ENCODE measurements at regions of chr2 and their contacts with region 1.

Region 1: DNA sequence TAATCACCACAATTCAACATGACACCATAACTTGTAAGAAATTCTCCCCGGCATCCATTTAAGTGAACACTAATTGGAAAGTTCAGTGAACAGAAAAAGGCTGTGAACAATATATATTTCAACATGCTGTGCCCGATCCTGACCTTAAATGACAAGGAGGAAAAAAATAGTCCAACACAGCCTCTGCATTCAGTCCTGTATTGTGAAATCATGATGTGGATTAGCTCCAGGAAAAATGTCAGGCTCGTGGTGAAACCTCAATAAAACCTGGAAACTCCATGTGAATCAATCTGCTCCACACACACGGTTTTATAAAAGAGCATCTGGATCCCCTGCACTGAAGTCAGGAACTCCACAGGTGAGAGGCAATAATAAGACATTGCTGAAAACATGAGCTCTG is 145.4 kb upstream of the SPOPL start:
- DNase-seq: peak; percentile 72
- H3K4me3 ChIP-seq: no peak overlapping the region
- H3K27me3 ChIP-seq: no peaks in the 10 kb centered on the region
- CTCF ChIP-seq: no peak

Region 2: DNA sequence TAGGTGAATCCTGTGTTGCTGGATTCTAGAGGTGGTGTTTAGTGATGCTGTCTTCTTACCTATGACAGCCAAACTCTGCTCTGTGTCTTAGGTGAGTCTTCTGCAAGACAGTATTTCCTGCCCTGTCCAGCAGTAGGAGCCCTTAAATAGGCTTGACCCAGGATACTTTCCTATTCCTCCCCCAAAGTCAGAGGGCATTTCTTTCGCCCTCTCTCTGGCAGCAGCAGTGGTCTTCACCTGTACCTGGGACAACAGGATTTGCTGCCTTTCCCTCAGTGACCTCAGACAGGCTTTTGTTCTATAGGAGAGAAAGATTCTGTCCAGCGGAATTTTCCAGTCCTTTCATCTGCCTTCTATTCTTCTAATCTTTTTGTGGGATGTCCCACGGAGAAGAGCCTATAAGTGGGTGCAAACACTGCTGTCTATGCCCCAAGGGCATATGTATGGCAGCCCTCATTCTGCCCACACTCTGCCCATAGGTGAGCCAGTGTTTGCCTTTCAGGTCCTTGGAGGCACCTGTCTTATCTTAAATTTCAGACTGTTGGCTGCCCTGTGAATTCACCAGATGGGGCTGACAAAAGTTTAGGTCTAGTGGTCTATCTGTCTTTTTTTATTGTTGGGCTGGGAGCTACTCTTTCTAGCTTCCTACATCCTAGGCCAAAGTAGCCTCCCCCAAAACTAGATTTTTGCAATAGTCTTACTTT is 32.0 kb before region 1 on chr2:
- CTCF ChIA-PET with region 1: no interaction called
- POLR2A ChIA-PET with region 1: no interaction called
- DNase-seq: no peak
- H3K4me3 ChIP-seq: no peak overlapping the region
- H3K27me3 ChIP-seq: no peaks in the 10 kb centered on the region
- CTCF ChIP-seq: no peak

Region 3: DNA sequence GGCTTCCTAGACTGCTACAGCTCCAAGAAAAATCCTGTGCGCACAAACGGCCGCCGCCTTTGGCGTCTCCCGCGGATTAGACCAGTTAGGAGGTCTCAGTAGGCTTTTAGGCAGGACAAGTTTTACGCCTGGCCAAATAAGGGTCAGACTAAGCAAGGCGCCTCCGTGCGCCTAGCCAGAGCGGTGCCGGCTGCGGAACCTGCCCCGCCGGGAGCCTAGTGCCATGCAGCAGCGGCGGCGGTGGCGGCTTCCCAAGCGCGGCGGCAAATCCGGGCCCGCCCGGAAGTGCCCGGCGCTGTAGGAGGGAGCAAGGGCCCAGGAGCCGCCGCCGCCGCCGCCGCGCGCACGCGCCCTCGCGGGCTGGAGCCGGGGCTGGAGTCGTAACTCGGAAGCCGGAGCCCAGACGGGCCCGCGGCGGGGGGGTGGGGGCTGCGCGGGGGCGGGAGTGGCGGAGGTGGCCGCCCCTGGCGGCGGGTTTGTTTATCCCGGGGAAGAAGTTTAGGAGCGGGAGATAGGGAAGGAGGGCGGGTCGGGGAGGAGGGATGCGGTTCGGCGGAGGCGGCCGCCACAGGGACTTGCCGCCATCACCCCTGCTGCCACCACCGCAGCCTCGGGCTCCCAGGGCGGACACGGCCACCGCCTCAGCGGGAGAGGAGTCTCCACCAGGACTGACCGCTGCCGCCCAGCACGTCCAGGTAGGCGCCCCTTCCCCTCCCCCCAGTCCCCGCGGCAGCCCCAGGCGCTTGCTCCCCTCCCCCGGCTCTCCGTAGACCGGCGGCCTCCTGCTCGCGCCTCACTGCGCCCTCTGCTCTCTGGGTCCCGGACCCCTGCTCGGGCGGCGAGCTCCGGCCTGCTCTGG is 145.5 kb after region 1 on chr2 and contains the start of gene SPOPL:
- CTCF ChIA-PET with region 1: no interaction called
- POLR2A ChIA-PET with region 1: interaction called, 10 read pairs
- DNase-seq: peak; percentile 18
- H3K4me3 ChIP-seq: peak within 1 kb of the TSS; percentile 81
- H3K27me3 ChIP-seq: no peaks in the 10 kb centered on the region
- CTCF ChIP-seq: no peak
- polyA plus RNA-seq, gene SPOPL: 5.8 and 9.9 TPM in 2 replicates

Measured in BJ (cell line).